ENCODE measurements at regions of chr22 and their contacts with region 1.

Region 1: DNA sequence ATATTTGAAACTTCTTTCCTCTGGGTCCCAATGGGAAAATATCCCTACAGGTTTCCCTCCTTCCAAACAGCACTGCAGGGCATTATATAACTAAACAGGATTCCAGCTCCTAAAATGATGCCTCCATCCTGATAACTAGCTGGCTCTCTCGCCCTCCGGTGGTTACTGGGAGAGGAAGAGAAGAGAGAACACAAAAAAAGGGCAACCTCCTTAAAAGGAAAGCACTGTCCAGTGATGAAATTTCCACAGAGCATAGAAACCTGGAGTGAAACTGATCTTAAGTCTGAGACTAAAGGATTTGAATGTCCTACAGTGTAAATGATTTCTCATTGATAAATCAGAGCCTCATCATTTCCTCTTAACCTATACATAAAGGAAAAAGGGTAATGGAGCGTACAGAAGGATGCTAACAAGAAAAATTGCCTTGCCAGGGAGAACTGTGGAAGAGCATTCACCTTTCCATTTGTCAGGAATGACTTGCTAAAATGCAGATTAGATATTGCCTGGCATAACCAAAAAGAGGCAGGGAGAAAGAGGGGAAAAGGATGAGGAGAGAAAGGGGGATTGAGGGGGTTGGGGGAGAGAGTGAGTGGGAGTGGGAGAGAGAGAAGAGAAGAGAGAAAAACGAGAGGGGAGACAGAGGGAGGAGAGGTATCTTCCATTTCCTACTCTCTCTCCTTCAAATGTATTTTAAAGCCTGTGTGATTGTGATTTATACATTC is 121.3 kb downstream of the APOL5 start:
- DNase-seq: no peak
- H3K4me3 ChIP-seq: peak overlapping the region; percentile 47 to 59 (median 56)
- H3K27ac ChIP-seq: peak overlapping the region; percentile 77 to 82 (median 80)
- H3K4me1 ChIP-seq: peaks cover 77 to 86% (median 83%) of the 10 kb centered on the region in 4 donors
- H3K27me3 ChIP-seq: no peaks in the 10 kb centered on the region
- CTCF ChIP-seq: peak; percentile 48 to 68 (median 59)
- EP300 ChIP-seq: no peak
- POLR2A ChIP-seq: no peak

Region 2: DNA sequence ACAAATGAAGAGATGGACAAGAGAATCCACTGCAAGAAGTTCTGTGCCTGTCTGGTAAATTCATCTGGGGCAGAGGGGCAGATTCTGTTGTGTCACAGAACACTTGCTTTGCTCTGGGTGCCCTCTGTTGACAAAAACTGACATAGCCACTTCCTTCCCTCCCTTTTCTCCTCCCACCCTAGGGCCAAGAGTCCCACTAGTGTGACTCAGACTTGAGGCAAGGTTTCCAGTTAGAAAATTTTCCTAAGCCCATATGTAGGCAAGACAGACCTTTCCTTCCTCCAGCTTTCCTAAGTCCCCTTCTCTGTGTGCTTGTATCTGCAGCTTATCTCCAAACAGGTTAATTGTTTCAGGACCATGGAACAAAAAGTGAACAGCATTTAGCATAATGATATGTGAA is 82.8 kb after region 1 on chr22:
- intact Hi-C with region 1: loop called (anchors 5 kb)
- DNase-seq: no peak
- H3K4me3 ChIP-seq: no peak overlapping the region
- H3K27ac ChIP-seq: peak overlapping the region; percentile 64 to 73 (median 66)
- H3K4me1 ChIP-seq: peaks cover 40 to 73% (median 67%) of the 10 kb centered on the region in 4 donors
- H3K27me3 ChIP-seq: no peaks in the 10 kb centered on the region
- CTCF ChIP-seq: peak; percentile 60 to 77 (median 66)
- EP300 ChIP-seq: no peak
- POLR2A ChIP-seq: no peak